Dorsolateral prefrontal cortex (tissue), 120 donors: ENCODE measurements at regions of chr2 and their contacts with region 1.

Region 1: GRCh38 chr2:152466980-152467676 is 132.2 kb downstream of the FMNL2 start:
- DNase-seq: peak in 1 of 10 donors; percentile 51
- H3K4me3 ChIP-seq: peak overlapping the region in 17 of 59 donors; percentile 0 to 40 (median 9)
- H3K27ac ChIP-seq: peak overlapping the region; percentile 84 to 100 (median 97)
- H3K27me3 ChIP-seq: no peaks in the 10 kb centered on the region
- CTCF ChIP-seq: no peak

Region 2: DNA sequence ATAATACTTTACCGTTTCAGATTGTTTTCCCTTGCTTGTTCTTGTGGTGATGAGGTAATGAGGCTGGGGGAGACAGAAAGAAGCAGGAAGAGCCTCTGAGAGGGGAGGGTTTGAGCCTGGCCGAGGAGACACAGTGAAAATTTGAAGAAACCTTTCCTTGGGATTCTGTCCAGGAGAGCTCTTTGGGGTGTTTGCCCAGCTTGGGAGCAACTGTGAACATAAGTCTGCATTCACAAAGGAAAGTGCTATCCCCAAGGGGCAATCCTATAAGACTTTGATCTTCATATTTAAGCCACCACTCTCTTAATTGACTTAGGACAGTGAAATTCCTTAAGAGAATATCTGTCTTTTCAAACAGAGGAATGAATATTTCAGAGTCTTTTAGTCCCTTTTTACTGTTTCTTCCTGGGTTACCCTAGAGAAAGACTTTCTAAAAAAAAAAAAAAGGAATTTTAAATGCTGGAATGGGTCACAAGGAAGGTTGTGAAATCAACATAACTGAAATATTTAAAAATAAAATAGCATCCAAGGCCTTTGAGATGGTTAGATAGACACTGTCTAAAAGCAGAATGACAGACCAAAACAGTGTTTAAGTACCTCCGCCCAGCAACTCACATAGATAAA is 239.0 kb before region 1 on chr2:
- intact Hi-C with region 1: no loop called
- DNase-seq: no peak
- H3K4me3 ChIP-seq: no peak overlapping the region
- H3K27ac ChIP-seq: peak overlapping the region in 6 of 59 donors; percentile 27 to 45 (median 34)
- H3K27me3 ChIP-seq: no peaks in the 10 kb centered on the region
- CTCF ChIP-seq: no peak

Region 3: GRCh38 chr2:152421521-152422370 is 45.4 kb before region 1 on chr2:
- intact Hi-C with region 1: no loop called
- DNase-seq: no peak
- H3K4me3 ChIP-seq: peak overlapping the region in 1 of 59 donors; percentile 31
- H3K27ac ChIP-seq: peak overlapping the region; percentile 22 to 100 (median 84)
- H3K27me3 ChIP-seq: no peaks in the 10 kb centered on the region
- CTCF ChIP-seq: peak in 1 of 56 donors; percentile 8

Region 4: DNA sequence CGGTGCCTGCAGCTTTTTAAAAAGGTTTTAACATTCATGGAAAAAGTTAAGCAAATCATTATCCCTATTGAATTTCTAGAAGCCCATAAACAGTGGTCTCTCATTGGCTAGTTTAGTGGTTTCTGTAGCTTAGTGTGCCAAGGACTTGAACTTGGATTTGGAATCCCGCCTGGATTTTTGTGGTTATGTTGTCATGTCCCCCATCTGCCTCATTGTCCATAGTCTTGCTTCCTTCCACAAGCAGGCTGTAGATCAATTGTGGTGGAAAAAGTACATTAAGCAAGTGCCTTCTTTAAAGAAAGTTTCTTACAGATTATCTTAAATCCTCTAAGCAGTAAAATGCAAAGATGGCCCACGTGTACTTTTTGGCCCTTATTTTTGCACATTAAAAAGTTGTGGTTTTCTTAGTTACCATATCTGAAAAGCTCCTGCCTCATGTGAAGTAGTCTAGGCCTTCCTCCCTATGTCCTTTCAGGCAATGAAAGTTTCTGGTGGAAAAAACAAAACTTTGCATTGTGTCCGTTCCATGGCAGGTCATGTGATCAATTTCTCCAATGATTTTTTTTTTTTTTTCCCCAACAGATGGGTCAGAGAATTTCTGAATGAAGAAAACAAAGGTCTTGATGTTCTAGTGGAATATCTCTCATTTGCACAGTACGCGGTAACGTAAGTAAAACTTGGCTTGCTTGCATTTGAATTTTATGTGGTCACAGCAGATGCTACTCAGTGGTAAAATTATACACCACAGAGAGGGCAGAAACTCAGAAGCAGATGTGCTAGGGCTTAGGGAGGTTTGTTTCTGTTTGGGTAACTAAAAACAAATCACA is 91.2 kb after region 1 on chr2:
- intact Hi-C with region 1: loop called in 1 of 2 experiments (anchors 5 kb)
- DNase-seq: no peak
- H3K4me3 ChIP-seq: peak overlapping the region in 9 of 59 donors; percentile 3 to 21 (median 12)
- H3K27ac ChIP-seq: peak overlapping the region in 58 of 59 donors; percentile 17 to 96 (median 81)
- H3K27me3 ChIP-seq: no peaks in the 10 kb centered on the region
- CTCF ChIP-seq: peak in 1 of 56 donors; percentile 28

Region 5: DNA sequence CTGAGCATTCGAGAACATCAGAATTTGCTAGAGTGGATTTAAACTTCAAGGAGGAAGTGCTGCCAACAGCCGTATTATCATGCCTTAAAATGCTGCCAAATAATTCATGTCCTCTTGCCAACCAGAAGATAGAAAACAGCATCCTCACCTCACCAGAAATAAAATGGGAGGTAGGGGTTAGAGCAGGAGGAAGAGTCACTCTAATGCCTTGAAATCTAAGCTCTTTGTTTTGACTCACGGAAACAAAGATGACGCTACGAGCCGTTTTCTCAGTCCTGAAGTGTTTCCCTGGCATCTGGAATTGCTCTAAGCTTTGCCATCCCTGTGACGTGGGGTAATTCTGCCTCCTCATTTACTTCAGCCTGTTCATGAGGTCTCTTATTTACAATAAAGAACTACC is 153.1 kb after region 1 on chr2:
- intact Hi-C with region 1: loop called in 1 of 2 experiments (anchors 5 kb)
- DNase-seq: no peak
- H3K4me3 ChIP-seq: no peak overlapping the region
- H3K27ac ChIP-seq: peak overlapping the region in 57 of 59 donors; percentile 4 to 90 (median 69)
- H3K27me3 ChIP-seq: no peaks in the 10 kb centered on the region
- CTCF ChIP-seq: no peak